ENCODE measurements at regions of chr14 and their contacts with region 1.

Region 1: GRCh38 chr14:69726761-69727511 is 40.0 kb upstream of the SRSF5 start:
- DNase-seq: peak; percentile 89
- ATAC-seq: peak; percentile 93
- H3K4me3 ChIP-seq: peak overlapping the region in 4 of 5 experiments; percentile 26 to 77 (median 58)
- H3K4me3 Mint-ChIP-seq: peak overlapping the region; percentile 83
- H3K27ac ChIP-seq: peak overlapping the region in 1 of 2 donors; percentile 48
- H3K27ac Mint-ChIP-seq: peak overlapping the region; percentile 37
- H3K4me1 ChIP-seq: peaks cover 4 to 12% of the 10 kb centered on the region in 2 donors
- H3K4me1 Mint-ChIP-seq: peaks cover 12% of the 10 kb centered on the region
- H3K27me3 ChIP-seq: no peaks in the 10 kb centered on the region
- H3K27me3 Mint-ChIP-seq: peaks cover 3% of the 10 kb centered on the region
- CTCF ChIP-seq: peak; percentile 99

Region 2: GRCh38 chr14:69580009-69580577 is 146.8 kb before region 1 on chr14:
- CTCF ChIA-PET with region 1: interaction called, 101 read pairs
- POLR2A ChIA-PET with region 1: interaction called, 3 read pairs
- intact Hi-C with region 1: loop called (anchors 1 kb)
- DNase-seq: no peak
- ATAC-seq: peak; percentile 21
- H3K4me3 ChIP-seq: no peak overlapping the region
- H3K4me3 Mint-ChIP-seq: no peak overlapping the region
- H3K27ac ChIP-seq: no peak overlapping the region
- H3K27ac Mint-ChIP-seq: no peak overlapping the region
- H3K4me1 ChIP-seq: peaks cover 0 to 8% of the 10 kb centered on the region in 2 donors
- H3K4me1 Mint-ChIP-seq: peaks cover 10% of the 10 kb centered on the region
- H3K27me3 ChIP-seq: peaks cover 0 to 15% (median 3%) of the 10 kb centered on the region in 4 experiments
- H3K27me3 Mint-ChIP-seq: peaks cover 26% of the 10 kb centered on the region
- CTCF ChIP-seq: no peak

Region 3: DNA sequence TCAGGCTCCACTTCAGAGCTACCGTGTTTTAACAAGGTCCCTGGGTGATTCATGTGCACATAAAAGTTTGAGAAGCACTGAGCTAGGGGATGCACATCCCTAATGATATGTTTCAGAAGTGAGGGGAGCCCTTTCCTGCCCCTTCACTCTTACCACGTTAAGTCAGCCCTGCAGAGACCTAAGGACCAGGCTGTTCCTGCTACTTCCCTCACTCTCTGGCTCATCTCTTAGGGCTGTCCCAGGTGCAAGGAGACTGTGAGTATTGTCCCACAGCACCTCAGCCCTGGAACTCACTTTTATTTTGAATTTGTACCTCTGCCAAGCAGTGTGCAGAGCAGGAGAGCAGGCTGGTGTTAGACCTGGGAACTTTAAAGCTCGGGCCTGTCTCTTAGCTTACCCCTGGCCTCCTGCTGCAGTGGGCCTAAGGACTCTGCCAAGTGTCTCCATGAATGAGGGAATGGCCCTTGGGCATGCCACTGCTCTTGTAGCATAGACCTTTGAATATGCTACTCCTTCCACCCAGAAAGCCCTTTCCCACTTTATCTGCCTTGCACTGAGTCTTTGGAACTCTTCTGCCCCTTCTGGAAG is 126.5 kb before region 1 on chr14:
- CTCF ChIA-PET with region 1: interaction called, 112 read pairs
- POLR2A ChIA-PET with region 1: no interaction called
- intact Hi-C with region 1: loop called (anchors 1 kb)
- DNase-seq: no peak
- ATAC-seq: no peak
- H3K4me3 ChIP-seq: no peak overlapping the region
- H3K4me3 Mint-ChIP-seq: no peak overlapping the region
- H3K27ac ChIP-seq: no peak overlapping the region
- H3K27ac Mint-ChIP-seq: no peak overlapping the region
- H3K4me1 ChIP-seq: no peaks in the 10 kb centered on the region
- H3K4me1 Mint-ChIP-seq: peaks cover 2% of the 10 kb centered on the region
- H3K27me3 ChIP-seq: no peaks in the 10 kb centered on the region
- H3K27me3 Mint-ChIP-seq: no peaks in the 10 kb centered on the region
- CTCF ChIP-seq: no peak

Region 4: GRCh38 chr14:69673578-69674305 is 53.2 kb before region 1 on chr14:
- CTCF ChIA-PET with region 1: interaction called, 8 read pairs
- POLR2A ChIA-PET with region 1: no interaction called
- intact Hi-C with region 1: loop called (anchors 2 kb)
- DNase-seq: no peak
- ATAC-seq: peak; percentile 50
- H3K4me3 ChIP-seq: peak overlapping the region in 1 of 5 experiments; percentile 38
- H3K4me3 Mint-ChIP-seq: peak overlapping the region; percentile 73
- H3K27ac ChIP-seq: peak overlapping the region; percentile 27 to 77
- H3K27ac Mint-ChIP-seq: peak overlapping the region; percentile 91
- H3K4me1 ChIP-seq: peaks cover 75 to 80% of the 10 kb centered on the region in 2 donors
- H3K4me1 Mint-ChIP-seq: peaks cover 85% of the 10 kb centered on the region
- H3K27me3 ChIP-seq: no peaks in the 10 kb centered on the region
- H3K27me3 Mint-ChIP-seq: no peaks in the 10 kb centered on the region
- CTCF ChIP-seq: peak; percentile 27

Region 5: GRCh38 chr14:69708586-69709174 is 18.3 kb before region 1 on chr14:
- CTCF ChIA-PET with region 1: interaction called, 10 read pairs
- POLR2A ChIA-PET with region 1: no interaction called
- intact Hi-C with region 1: loop called (anchors 2 kb)
- DNase-seq: no peak
- ATAC-seq: no peak
- H3K4me3 ChIP-seq: no peak overlapping the region
- H3K4me3 Mint-ChIP-seq: no peak overlapping the region
- H3K27ac ChIP-seq: no peak overlapping the region
- H3K27ac Mint-ChIP-seq: no peak overlapping the region
- H3K4me1 ChIP-seq: peaks cover 14 to 18% of the 10 kb centered on the region in 2 donors
- H3K4me1 Mint-ChIP-seq: peaks cover 39% of the 10 kb centered on the region
- H3K27me3 ChIP-seq: no peaks in the 10 kb centered on the region
- H3K27me3 Mint-ChIP-seq: no peaks in the 10 kb centered on the region
- CTCF ChIP-seq: peak; percentile 25